GM10248 (cell line): ENCODE measurements at regions of chr1 and their contacts with region 1.

Region 1: GRCh38 chr1:51296383-51297357 is 33.7 kb downstream of the TTC39A start:
- DNase-seq: peak; percentile 87
- CTCF ChIP-seq: peak; percentile 98

Region 2: DNA sequence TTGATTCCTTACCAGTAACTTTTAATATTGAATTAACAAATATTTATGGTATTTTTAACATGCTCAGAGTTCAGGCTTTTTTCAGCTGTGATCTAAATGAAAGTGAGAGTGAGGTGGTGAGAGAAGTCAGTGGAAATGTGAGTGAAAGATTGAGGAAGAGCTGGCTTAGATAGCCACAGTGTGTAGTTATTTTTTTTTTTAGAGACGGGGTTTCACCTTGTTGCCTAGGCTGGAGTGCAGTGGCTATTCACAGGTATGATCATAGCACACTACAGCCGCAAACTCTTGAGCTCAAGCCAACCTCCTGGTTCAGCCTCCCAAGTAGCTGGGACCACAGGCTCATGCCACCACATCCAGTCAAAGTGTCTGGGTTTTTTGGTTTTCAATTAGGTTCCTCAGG is 49.6 kb before region 1 on chr1:
- CTCF ChIA-PET with region 1: interaction called, 11 read pairs
- POLR2A ChIA-PET with region 1: no interaction called
- DNase-seq: peak; percentile 66
- CTCF ChIP-seq: no peak

Region 3: GRCh38 chr1:51264451-51264850 is 32.2 kb before region 1 on chr1:
- CTCF ChIA-PET with region 1: interaction called, 46 read pairs
- POLR2A ChIA-PET with region 1: no interaction called
- DNase-seq: no peak
- CTCF ChIP-seq: no peak

Region 4: DNA sequence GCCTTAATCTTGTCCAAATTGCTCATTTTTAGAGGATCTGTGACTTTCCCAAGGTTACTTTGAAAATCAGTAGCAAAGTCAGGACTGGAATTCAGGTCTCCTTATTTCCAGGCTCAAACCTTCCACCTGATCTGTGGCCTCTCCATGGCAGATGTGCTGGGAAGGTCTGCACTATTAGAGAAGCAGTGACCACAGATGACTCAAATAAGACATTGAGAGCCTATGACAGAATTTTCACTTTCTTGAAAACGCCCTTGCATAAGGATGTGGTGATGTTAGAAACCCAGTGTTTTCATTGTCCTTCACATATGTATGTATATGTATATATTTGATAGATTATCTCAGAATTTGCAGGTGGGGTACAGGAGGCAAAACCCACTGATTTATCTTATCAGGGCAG is 11.6 kb before region 1 on chr1:
- CTCF ChIA-PET with region 1: interaction called, 51 read pairs
- POLR2A ChIA-PET with region 1: no interaction called
- DNase-seq: peak; percentile 73
- CTCF ChIP-seq: no peak

Region 5: DNA sequence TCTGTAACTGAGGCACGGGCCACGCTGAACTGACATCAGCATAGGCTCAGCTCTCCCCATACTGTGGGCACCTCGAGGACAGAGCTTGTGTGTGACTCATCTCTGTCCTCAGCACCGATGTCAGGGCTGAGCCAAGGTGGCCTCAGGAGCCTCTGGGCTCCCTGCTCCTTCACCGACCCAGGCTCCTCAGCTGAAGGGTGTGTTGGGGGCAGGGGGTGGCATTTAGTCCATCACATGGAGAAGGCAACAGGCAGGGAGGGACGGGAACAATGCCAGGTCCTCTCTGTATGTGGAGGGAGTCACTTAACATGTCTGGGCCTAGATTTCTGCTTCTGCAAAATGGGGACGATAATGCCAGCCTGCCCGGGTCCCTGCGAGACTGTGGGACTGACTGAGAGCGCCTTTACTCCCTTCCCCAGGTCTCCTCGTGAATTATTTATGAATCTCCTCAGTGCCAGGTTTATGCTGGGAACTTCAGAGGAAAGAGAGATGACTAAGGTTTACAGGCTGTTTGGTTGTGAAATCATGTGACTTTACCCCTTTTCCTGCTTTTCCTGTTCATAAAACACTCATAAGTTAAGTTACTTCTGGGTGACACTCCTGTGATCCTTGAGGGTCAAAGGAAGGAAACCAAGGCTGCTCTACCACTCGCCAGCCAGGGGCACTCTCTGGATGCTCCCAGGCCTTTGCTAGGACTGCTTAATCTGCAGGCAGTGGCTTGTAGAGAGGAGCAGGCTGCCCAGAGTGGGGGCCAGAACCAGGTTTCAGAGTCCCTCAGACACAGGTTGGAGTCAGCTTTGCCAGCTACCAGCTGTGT is 17.5 kb after region 1 on chr1:
- CTCF ChIA-PET with region 1: interaction called, 47 read pairs
- POLR2A ChIA-PET with region 1: no interaction called
- DNase-seq: no peak
- CTCF ChIP-seq: no peak

Region 6: GRCh38 chr1:51463561-51463960 is 166.9 kb after region 1 on chr1:
- CTCF ChIA-PET with region 1: no interaction called
- POLR2A ChIA-PET with region 1: no interaction called
- DNase-seq: no peak
- CTCF ChIP-seq: no peak